ENCODE measurements at regions of chr10 and their contacts with region 1.

Region 1: GRCh38 chr10:71771821-71772617 is 1.3 kb downstream of the VSIR start:
- DNase-seq: peak; percentile 67
- H3K27ac ChIP-seq: peak overlapping the region; percentile 82
- CTCF ChIP-seq: no peak

Region 2: GRCh38 chr10:71475243-71475871 is 296.7 kb before region 1 on chr10:
- CTCF ChIA-PET with region 1: no interaction called
- POLR2A ChIA-PET with region 1: no interaction called
- DNase-seq: no peak
- H3K27ac ChIP-seq: no peak overlapping the region
- CTCF ChIP-seq: no peak

Region 3: GRCh38 chr10:71708301-71708703 is 63.7 kb before region 1 on chr10:
- CTCF ChIA-PET with region 1: interaction called, 10 read pairs
- POLR2A ChIA-PET with region 1: interaction called, 9 read pairs
- DNase-seq: peak; percentile 37
- H3K27ac ChIP-seq: no peak overlapping the region
- CTCF ChIP-seq: peak; percentile 63

Region 4: DNA sequence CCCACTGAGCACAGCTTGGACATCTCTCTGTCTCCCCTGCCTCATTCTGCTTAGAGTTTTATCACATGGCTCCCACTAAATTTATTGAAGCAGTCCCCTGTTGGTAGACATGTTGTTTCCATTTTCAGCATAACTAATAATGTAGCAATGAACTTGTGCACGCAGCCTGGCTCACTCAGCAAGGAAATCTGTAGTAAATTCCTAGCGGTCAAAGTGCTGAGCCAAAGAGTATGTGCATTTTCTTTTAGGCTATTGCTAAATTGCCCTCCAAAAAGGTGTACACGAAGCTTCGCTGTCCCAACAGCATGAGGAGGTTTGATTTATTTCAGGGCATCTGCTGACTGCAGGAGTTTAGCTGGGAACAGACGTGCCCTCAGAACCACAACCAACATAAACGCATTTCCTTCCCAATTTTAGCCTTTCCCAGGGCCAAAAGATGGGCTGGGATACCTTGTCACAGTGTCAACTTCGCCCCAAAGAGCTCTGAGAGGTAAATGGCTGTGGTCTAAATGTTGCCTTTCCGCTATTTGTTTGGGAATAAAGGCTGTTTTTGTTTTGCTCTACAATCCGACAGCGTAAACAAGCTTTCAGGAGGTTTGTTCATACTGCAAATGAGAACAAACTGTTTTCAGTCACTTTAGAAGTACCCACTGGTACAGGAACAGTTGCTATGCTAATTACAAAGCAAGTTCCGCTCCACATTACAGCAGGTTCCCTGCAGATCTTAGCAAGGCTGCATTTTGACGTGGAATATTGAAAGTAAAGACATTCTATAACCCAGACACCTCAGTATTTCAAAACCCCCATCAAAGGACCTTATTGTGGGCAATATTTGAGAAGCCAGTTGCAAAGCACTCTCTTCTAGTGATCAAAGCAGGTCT is 15.5 kb before region 1 on chr10:
- CTCF ChIA-PET with region 1: interaction called, 16 read pairs
- POLR2A ChIA-PET with region 1: no interaction called
- DNase-seq: no peak
- H3K27ac ChIP-seq: peak overlapping the region; percentile 62
- CTCF ChIP-seq: no peak

Measured in RWPE1 (cell line).